ENCODE measurements at regions of chr20 and their contacts with region 1.

Region 1: DNA sequence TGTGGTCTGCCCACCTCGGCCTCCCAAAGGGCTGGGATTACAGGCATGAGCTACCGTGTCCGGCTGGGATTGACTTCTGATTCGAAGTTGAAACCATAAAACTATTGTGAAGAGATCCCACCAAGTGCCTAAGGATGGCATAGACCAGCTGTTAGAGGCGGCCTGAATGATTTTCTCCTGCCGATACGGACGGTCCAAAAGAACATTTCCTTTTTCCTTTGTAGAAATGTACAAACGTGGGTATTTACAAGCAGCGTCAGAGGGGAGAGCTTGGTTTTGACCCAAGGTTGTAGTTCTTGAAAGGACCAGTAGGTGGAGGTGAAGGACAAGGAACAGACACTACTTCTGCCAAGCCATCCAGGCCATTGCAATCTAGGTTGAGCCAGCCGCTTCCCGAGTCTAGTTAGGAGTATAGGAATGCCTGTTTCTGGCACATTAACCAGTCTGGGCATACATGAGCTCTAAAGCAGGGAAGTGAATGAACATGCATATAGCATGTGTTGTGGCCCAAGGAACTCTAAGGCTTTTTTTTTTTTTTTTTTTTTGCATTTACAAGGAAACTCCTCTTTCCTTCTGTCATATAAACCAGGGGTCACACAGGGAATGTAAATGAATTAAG is 29.1 kb downstream of the MOCS3 start:
- DNase-seq: peak in 3 of 5 donors; percentile 50 to 64 (median 58)
- ATAC-seq: peak; percentile 81 to 96 (median 94)
- H3K4me3 ChIP-seq: no peak overlapping the region
- H3K27ac ChIP-seq: no peak overlapping the region
- H3K4me1 ChIP-seq: peaks cover 0 to 4% (median 0%) of the 10 kb centered on the region in 12 donors
- H3K27me3 ChIP-seq: peaks cover 0 to 56% (median 7%) of the 10 kb centered on the region in 9 donors
- CTCF ChIP-seq: peak; percentile 81 to 93 (median 87)
- POLR2A ChIP-seq: no peak

Region 2: GRCh38 chr20:50805065-50805705 is 182.5 kb before region 1 on chr20:
- intact Hi-C with region 1: no loop called
- DNase-seq: no peak
- ATAC-seq: no peak
- H3K4me3 ChIP-seq: no peak overlapping the region
- H3K27ac ChIP-seq: peak overlapping the region in 1 of 12 donors; percentile 15
- H3K4me1 ChIP-seq: peaks cover 0 to 6% (median 0%) of the 10 kb centered on the region in 12 donors
- H3K27me3 ChIP-seq: no peaks in the 10 kb centered on the region
- CTCF ChIP-seq: no peak
- POLR2A ChIP-seq: no peak

Region 3: GRCh38 chr20:50891138-50891537 is 96.6 kb before region 1 on chr20:
- intact Hi-C with region 1: no loop called
- DNase-seq: no peak
- ATAC-seq: peak; percentile 45 to 81 (median 74)
- H3K4me3 ChIP-seq: no peak overlapping the region
- H3K27ac ChIP-seq: no peak overlapping the region
- H3K4me1 ChIP-seq: peaks cover 0 to 5% (median 0%) of the 10 kb centered on the region in 12 donors
- H3K27me3 ChIP-seq: no peaks in the 10 kb centered on the region
- CTCF ChIP-seq: no peak
- POLR2A ChIP-seq: no peak

Region 4: GRCh38 chr20:51306503-51307358 is 319.0 kb after region 1 on chr20:
- intact Hi-C with region 1: loop called (anchors 1 to 5 kb)
- DNase-seq: peak; percentile 61 to 85 (median 68)
- ATAC-seq: peak; percentile 90 to 97 (median 92)
- H3K4me3 ChIP-seq: no peak overlapping the region
- H3K27ac ChIP-seq: no peak overlapping the region
- H3K4me1 ChIP-seq: peaks cover 0 to 7% (median 0%) of the 10 kb centered on the region in 12 donors
- H3K27me3 ChIP-seq: peaks cover 0 to 15% (median 0%) of the 10 kb centered on the region in 9 donors
- CTCF ChIP-seq: peak; percentile 86 to 96 (median 90)
- POLR2A ChIP-seq: no peak

Region 5: DNA sequence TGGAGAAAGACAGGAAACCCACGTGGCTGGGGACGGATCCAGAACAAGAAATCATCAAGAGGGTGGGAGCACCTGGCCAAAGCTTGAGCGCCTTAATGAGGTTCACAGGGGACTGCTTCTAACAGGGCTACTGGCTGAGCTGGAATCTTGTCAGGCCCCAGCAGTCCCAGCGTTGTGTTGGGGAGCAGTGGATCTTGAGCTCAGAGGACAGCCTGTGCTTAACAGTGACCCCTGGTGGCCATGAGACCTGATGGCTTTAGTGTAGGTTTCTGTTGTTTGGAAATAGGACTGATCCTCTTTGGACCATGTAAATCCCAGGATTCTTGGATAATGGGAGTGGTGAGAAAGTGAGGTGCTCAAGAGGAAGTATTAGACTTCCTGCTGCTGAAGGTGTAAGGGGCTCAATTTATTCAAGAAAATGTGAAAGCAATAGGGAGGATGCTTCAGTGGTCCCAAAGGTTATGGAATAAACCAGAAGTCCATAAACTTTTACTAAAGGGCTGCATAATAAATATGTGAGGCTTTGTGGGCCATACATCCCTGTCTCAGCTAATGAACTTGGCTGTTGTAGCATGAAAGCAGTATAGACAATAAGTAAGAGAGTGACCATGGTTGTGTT is 338.6 kb after region 1 on chr20:
- intact Hi-C with region 1: loop called in 1 of 10 experiments (anchors 5 kb)
- DNase-seq: peak in 1 of 5 donors; percentile 36
- ATAC-seq: no peak
- H3K4me3 ChIP-seq: no peak overlapping the region
- H3K27ac ChIP-seq: no peak overlapping the region
- H3K4me1 ChIP-seq: no peaks in the 10 kb centered on the region
- H3K27me3 ChIP-seq: peaks cover 0 to 16% (median 0%) of the 10 kb centered on the region in 9 donors
- CTCF ChIP-seq: peak in 11 of 12 donors; percentile 14 to 75 (median 38)
- POLR2A ChIP-seq: no peak

Region 6: GRCh38 chr20:51595058-51595532 is 607.4 kb after region 1 on chr20:
- intact Hi-C with region 1: loop called in 6 of 10 experiments (anchors 10 kb)
- DNase-seq: peak; percentile 86 to 92 (median 89)
- ATAC-seq: peak; percentile 96 to 99 (median 97)
- H3K4me3 ChIP-seq: peak overlapping the region in 1 of 12 donors; percentile 17
- H3K27ac ChIP-seq: peak overlapping the region in 2 of 12 donors; percentile 1 to 7
- H3K4me1 ChIP-seq: peaks cover 0 to 14% (median 4%) of the 10 kb centered on the region in 12 donors
- H3K27me3 ChIP-seq: no peaks in the 10 kb centered on the region
- CTCF ChIP-seq: peak; percentile 81 to 92 (median 87)
- POLR2A ChIP-seq: no peak

Region 7: DNA sequence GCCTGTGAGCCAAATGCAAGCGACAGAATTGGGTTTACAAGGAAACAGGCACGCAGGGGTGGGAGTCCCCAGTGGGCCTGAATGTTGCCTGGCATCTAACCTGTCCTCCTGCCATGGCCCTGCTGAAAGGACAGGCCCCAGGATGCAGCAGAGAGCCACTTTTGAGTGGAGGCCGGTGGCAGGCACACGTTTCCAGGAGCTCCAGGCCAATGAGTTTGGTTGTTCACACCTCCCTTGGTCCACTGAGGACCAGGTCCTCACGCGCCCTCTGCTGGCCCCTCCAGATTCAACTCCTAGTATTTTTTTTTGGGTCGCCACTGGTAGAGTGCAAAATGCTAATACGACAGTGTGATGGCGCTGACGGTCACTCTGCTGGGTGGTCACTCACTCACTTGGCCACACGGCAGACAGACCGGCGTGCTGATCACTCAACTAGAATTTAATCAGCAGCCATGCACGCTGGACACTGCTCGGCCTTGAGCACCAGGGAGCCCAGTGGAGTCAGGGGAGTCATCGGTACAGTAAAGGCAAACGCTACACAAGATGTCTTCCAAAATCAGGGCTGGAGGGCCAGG is 636.5 kb after region 1 on chr20:
- intact Hi-C with region 1: loop called in 3 of 10 experiments (anchors 10 kb)
- DNase-seq: peak in 4 of 5 donors; percentile 29 to 74 (median 46)
- ATAC-seq: peak in 3 of 4 donors; percentile 54 to 57 (median 55)
- H3K4me3 ChIP-seq: no peak overlapping the region
- H3K27ac ChIP-seq: no peak overlapping the region
- H3K4me1 ChIP-seq: peaks cover 0 to 6% (median under 1%) of the 10 kb centered on the region in 12 donors
- H3K27me3 ChIP-seq: no peaks in the 10 kb centered on the region
- CTCF ChIP-seq: peak; percentile 38 to 65 (median 58)
- POLR2A ChIP-seq: no peak